Caco-2 (cell line): ENCODE measurements at regions of chr18 and their contacts with region 1.

Region 1: GRCh38 chr18:73136134-73136533 is 268.3 kb upstream of the NETO1 start:
- DNase-seq: no peak
- H3K4me3 ChIP-seq: no peak overlapping the region
- H3K4me3 Mint-ChIP-seq: no peak overlapping the region
- H3K27ac Mint-ChIP-seq: no peak overlapping the region
- H3K4me1 ChIP-seq: no peaks in the 10 kb centered on the region
- H3K4me1 Mint-ChIP-seq: no peaks in the 10 kb centered on the region
- H3K27me3 ChIP-seq: no peaks in the 10 kb centered on the region
- H3K27me3 Mint-ChIP-seq: peaks cover 2% of the 10 kb centered on the region
- CTCF ChIP-seq: no peak

Region 2: DNA sequence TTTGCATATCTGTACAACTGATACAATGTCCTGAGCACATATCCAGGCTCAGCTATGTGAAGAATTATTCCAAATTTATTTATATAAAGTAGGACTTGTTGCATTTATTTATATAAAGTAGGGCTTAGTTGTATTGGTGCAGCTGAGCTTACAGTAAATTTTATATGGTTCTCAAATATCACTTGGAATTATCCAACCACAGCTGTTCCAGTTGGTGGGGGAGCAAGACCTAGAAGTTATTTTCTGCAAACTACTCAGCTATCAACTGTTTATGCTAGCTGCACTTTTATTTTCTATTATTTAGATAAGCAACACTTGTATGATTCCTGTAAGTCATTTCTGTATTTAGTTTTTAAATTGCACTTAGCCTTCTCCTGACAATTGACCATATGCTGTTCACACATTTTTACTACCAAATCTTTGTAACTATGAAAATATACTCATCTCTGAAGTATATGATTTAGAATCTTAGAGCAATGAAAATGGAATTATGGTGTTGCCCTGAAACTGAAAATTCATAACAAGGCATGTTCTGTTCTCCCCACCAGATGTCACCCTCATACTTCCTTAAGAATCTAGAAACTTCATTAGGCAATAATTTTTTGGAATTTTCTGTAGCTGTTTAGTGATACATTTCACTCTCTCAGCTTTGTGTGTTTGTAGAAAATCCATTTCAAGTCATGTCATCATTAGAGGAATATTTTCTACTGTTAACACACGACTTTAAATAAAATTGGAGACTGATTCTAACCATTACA is 435.0 kb before region 1 on chr18:
- CTCF ChIA-PET with region 1: no interaction called
- POLR2A ChIA-PET with region 1: no interaction called
- intact Hi-C with region 1: loop called (anchors 5 kb)
- DNase-seq: no peak
- H3K4me3 ChIP-seq: no peak overlapping the region
- H3K4me3 Mint-ChIP-seq: no peak overlapping the region
- H3K27ac Mint-ChIP-seq: no peak overlapping the region
- H3K4me1 ChIP-seq: no peaks in the 10 kb centered on the region
- H3K4me1 Mint-ChIP-seq: no peaks in the 10 kb centered on the region
- H3K27me3 ChIP-seq: no peaks in the 10 kb centered on the region
- H3K27me3 Mint-ChIP-seq: peaks cover 6% of the 10 kb centered on the region
- CTCF ChIP-seq: peak in 1 of 2 experiments; percentile 6

Region 3: DNA sequence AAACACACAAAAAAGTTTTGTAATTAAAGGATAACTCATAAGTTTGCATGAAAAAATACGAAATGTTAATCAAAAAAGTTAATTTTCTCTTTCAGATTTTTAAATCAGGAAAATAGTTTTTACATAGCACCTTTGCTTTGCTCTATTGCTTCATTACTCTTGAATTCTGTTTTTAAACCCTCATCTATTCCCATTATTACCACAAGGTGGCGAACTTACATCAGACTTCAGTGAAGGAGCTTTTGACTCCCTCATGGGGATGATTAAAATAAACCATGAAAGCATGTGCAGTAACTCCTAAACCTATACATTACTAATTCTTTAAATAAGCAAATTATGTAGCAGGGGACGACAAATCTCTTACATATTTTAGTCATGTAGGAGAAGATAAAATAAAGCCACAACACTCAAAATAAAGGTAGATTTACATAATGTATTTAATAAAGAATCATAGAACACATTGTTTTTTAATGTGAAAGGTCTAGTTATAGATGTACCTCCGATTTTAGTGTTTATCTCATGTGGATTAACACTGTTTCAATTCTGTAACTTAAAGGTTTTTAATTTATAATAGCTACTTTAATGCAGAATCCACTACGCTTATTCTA is 373.5 kb before region 1 on chr18:
- CTCF ChIA-PET with region 1: no interaction called
- POLR2A ChIA-PET with region 1: no interaction called
- intact Hi-C with region 1: loop called (anchors 1 kb)
- DNase-seq: peak in 1 of 2 experiments; percentile 38
- H3K4me3 ChIP-seq: no peak overlapping the region
- H3K4me3 Mint-ChIP-seq: no peak overlapping the region
- H3K27ac Mint-ChIP-seq: no peak overlapping the region
- H3K4me1 ChIP-seq: no peaks in the 10 kb centered on the region
- H3K4me1 Mint-ChIP-seq: no peaks in the 10 kb centered on the region
- H3K27me3 ChIP-seq: no peaks in the 10 kb centered on the region
- H3K27me3 Mint-ChIP-seq: peaks cover 2% of the 10 kb centered on the region
- CTCF ChIP-seq: peak; percentile 43 to 47